Dorsolateral prefrontal cortex (tissue), 120 donors: ENCODE measurements at regions of chr14 and their contacts with region 1.

Region 1: GRCh38 chr14:29927376-29928116 is at the start of gene PRKD1:
- DNase-seq: peak in 9 of 10 donors; percentile 18 to 78 (median 57)
- H3K4me3 ChIP-seq: peak within 1 kb of the TSS; percentile 58 to 88 (median 76)
- H3K27ac ChIP-seq: peak within 1 kb of the TSS in 58 of 59 donors; percentile 39 to 92 (median 81)
- H3K27me3 ChIP-seq: no peaks in the 10 kb centered on the region
- CTCF ChIP-seq: peak in 48 of 56 donors; percentile 8 to 67 (median 43)
- total RNA-seq, gene PRKD1: 11.2 to 35.0 (median 22.1) TPM

Region 2: DNA sequence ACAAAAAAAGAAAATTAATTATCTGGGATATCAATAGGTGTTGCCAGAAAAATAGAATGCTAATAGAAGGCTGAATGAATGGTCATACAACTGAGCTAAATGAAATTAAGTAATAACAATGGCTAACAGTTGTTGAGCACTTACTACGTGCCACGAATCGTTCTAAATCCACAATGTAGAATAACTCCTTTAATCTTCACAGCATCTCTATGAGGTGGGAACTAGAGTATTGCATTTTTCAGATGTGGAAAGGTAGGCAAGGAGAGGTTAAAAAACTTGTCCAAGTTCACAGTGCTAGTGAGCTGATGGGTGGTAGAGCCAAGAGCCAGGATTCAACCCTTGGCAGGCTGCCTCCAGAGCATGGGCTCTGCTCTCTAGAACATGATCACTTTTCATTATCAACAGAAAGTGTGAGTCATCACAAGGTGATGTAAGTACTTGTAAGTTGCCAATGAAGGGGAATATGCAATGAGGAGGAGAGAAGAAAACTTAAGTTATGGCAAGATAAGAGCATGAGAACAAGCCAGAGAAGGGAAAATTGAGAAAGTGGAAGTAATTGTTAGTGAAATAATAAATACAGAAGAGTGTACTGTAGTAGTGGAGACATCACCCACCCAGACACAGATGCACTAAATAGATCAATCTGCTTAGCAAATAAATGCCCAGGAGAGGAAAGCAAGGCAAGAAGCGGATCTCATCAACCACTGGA is 122.0 kb before region 1 on chr14:
- intact Hi-C with region 1: loop called in 1 of 2 experiments (anchors 10 kb)
- DNase-seq: no peak
- H3K4me3 ChIP-seq: no peak overlapping the region
- H3K27ac ChIP-seq: no peak overlapping the region
- H3K27me3 ChIP-seq: no peaks in the 10 kb centered on the region
- CTCF ChIP-seq: no peak

Region 3: DNA sequence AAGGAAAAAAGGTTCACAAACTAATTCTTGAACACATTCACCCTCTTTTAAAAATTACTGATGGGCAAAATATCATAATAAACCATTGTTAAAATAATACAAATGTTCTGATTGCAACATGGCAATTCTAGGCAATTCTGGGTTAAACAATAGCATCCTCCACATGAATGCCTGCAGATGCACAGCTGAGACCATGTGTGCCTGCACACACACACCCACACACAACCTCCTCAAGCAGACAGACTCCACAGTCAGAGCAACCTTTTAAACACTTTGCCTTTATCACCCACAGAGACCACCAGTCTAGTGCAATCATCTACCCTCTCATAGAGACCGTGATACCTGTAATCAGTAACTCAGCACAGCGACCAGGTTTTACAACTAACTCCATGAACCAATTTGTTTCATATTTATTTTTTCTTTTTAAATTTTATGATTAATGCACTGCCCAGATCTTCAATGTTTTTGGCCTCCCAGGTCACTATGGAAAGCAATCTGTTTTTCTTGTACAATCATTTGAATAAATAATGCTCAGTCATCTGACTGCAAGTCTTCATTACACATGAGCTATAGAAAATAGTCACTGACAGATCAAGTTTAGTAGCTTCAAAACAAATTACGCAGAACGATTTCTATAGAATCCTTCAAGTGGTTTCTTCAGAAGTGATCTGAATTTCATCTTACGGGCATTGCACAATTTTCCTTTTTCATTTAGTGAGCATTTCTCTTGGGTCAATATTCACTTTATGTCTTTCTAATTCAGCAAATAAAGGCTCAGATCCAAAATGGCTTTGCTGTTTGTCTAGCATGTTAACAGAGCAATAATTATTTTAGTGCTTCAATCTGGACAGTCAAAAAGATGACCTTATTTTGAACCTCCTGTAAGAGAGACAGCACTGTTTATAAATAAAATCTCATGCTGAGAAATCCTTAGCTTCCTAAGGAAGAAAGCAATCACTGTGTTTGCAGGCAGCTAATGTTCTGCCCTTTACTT is 105.6 kb before region 1 on chr14:
- intact Hi-C with region 1: loop called in 1 of 2 experiments (anchors 5 kb)
- DNase-seq: peak in 1 of 10 donors; percentile 42
- H3K4me3 ChIP-seq: no peak overlapping the region
- H3K27ac ChIP-seq: peak overlapping the region in 32 of 59 donors; percentile 3 to 77 (median 36)
- H3K27me3 ChIP-seq: no peaks in the 10 kb centered on the region
- CTCF ChIP-seq: no peak